ENCODE measurements at regions of chr1 and their contacts with region 1.

Region 1: GRCh38 chr1:64136752-64137411 is 66.5 kb upstream of the UBE2U start:
- DNase-seq: no peak
- ATAC-seq: peak; percentile 90

Region 2: GRCh38 chr1:63615768-63616420 is 521.0 kb before region 1 on chr1:
- intact Hi-C with region 1: loop called (anchors 5 kb)
- DNase-seq: no peak
- ATAC-seq: peak; percentile 62

Region 3: DNA sequence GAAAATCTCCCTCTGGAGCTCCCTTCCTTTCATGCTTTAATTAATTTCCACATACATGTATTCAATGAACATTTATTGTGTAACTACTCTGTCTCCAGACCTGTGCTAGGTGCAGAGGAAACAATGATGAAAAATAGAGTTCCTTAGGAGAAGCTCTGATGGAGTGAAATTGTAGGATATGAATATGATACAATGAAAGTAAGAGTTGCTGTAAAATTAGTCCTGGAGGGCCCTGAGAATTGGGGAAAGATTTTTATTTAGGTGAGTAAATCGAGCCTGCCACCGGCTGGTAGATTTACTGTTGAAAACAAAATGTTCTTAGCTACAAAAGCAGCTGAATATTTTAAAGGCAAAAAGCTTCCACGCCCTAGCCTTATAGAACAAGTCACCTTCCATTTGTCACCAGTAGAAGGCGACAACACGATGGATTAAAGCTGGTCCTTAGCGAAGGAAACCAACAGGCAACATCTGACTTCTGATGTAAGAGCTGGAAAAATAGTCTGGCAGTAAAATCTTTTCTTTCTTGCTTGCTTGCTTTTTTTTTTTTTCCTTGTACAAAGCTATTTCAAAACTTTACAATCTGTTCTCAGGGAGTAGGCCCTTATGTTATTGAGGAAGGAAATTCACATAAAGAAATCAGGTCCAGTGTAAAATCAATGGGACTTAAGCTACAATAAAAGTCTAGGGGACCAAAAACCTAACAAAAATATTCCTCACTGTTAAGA is 445.0 kb before region 1 on chr1:
- intact Hi-C with region 1: loop called (anchors 5 kb)
- DNase-seq: no peak
- ATAC-seq: peak; percentile 91

Region 4: DNA sequence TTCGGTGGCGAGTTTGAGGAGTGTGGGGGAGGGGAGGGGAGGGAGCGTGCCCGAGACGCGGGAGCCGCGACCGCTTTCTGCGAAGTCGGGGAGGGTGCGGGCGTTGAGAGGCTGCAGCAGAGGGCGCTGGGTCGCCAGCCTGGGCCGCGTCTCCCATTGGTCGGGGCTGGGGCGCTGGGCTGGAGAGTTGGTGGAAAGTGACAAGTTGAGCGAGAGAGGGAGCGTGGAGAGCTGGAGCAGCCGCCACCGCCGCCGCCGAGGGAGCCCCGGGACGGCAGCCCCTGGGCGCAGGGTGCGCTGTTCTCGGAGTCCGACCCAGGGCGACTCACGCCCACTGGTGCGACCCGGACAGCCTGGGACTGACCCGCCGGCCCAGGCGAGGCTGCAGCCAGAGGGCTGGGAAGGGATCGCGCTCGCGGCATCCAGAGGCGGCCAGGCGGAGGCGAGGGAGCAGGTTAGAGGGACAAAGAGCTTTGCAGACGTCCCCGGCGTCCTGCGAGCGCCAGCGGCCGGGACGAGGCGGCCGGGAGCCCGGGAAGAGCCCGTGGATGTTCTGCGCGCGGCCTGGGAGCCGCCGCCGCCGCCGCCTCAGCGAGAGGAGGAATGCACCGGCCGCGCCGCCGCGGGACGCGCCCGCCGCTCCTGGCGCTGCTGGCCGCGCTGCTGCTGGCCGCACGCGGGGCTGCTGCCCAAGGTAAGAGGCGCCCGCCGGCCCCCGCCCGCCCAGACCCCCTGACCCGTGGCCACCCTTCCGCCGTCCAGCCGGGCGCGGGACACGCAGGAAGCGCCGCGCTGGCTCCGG is 362.9 kb before region 1 on chr1 and contains the start of gene ROR1:
- intact Hi-C with region 1: loop called (anchors 1 kb)
- DNase-seq: peak; percentile 91
- ATAC-seq: peak; percentile 97
- total RNA-seq, gene ROR1: 8.4 TPM

Region 5: GRCh38 chr1:63935143-63935542 is 201.7 kb before region 1 on chr1:
- intact Hi-C with region 1: loop called (anchors 5 kb)
- DNase-seq: no peak
- ATAC-seq: peak; percentile 78

Region 6: GRCh38 chr1:64042331-64043100 is 94.4 kb before region 1 on chr1:
- intact Hi-C with region 1: loop called (anchors 10 kb)
- DNase-seq: no peak
- ATAC-seq: peak; percentile 84

Region 7: DNA sequence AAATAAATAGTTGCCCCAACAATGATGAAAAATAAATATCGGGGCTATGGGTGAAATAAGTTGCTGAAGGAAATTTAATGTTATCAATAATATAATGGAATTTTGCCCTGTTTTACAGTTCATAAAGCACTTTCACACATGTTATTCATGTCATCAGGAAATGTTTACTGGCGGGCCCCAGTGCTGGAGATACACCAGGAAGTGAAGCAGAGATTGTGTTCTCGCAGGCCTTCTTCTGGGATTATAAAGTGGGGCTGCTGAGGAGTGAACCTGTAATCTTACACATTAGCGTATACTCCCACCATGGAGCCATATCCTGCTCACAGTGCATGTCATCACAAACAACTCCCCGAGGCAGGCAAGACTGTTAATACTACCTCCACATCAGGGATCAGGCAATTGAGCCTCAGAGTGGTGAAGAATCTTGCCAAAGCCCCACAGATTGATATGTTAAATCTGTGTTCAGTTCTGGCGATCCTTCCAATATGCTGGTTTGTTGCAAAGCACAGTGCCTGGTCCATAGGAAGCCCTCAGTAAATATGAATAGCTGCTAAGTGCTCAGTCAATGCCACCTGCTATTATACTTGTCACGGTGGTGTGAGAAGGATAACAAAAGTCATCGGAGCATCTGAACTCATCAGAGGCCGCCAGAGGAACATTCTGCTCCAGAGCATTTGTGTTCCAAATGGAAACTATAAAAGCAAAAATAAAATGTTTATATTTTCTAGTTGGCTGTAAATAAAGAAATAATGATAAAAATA is 37.9 kb before region 1 on chr1:
- intact Hi-C with region 1: no loop called
- DNase-seq: no peak
- ATAC-seq: peak; percentile 58

Region 8: GRCh38 chr1:64163970-64164369 is 27.1 kb after region 1 on chr1:
- intact Hi-C with region 1: no loop called
- DNase-seq: no peak
- ATAC-seq: peak; percentile 62

Region 9: DNA sequence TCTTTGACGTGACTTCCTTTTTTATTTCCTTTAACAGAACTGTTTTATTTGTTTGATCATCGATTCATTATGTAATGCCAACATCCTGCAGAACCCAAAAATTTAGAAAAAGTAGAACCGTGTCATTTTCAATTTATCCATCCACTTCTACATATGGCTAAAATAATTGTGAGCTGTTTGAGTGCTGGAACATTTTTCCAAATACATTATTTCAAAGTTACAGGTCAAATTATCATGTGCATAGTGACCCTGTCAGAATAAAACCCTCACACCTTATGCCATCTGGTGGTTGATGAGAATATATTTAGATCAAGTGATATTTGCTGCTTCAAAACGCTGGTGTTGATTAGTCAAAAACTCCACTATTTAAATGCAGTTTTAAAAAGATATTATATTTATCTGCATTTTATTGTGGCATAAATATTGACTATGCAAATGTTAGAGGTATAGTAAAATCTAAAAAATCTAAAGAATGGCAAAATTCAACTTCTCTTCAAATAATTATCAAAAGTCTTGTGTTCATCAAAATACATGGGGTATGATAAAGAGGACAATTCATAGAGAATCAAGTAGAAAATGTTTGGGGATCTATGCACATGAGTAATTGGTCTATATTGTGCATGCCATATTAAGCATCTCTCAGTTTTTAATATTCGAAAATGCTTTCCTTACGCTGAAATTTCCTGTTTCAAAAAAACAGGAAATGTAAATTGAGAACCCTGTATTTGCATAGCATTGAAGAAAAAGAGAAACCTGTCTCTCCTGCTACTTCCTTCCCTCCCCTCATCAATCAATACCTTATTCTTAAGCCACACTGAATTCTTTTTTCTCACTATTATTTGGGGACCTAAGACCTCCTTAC is 106.2 kb after region 1 on chr1:
- intact Hi-C with region 1: no loop called
- DNase-seq: no peak
- ATAC-seq: no peak